Gastrocnemius medialis (tissue), 4 donors: ENCODE measurements at regions of chr1 and their contacts with region 1.

Region 1: DNA sequence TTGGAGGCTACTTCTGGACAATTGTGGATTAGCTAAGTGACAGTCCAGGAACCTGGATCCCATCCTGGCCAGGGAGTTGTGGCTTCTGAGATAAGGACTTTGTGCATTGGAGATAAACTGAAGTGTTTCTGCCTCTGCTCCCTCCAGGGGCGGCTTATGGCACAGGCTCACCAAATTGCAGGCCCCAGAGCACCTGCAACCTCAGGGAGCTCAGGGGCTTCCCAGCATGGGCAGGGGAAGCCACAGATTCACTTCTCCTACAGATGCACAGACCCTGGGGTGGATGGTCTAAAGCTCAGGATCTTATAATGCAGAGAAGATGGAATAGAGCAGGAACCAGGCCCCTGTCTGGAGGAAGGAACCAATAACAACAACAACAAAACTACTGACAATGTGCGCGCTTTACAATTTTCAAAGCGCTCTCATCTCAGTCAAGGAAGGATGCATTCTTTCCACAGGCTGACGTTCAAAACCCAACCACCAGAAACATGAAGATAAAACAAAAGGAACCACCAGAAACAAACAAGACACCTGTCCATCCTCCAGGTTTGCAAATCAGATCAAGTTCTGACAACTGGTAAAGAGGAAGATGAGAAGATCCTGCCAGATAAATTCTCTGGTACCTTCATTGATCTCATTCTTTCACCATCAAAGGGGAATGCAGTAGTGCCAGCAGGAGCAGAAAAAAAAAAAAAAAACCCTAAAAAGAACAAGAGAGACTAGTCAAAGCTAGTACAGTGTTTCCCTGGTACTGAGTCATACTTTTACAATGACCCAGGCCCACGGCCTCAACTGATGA is 121.0 kb upstream of the IRF2BP2 start:
- DNase-seq: no peak
- ATAC-seq: no peak
- H3K4me3 ChIP-seq: no peak overlapping the region
- H3K27ac ChIP-seq: no peak overlapping the region
- H3K4me1 ChIP-seq: peaks cover 27 to 37% of the 10 kb centered on the region in 2 donors
- H3K27me3 ChIP-seq: no peaks in the 10 kb centered on the region
- CTCF ChIP-seq: no peak
- POLR2A ChIP-seq: no peak

Region 2: GRCh38 chr1:234478481-234479309 is 252.3 kb before region 1 on chr1 and contains the start of gene TARBP1:
- in situ Hi-C with region 1: loop called in 1 of 4 experiments (anchors 25 kb)
- intact Hi-C with region 1: no loop called
- DNase-seq: peak; percentile 23 to 62
- ATAC-seq: peak; percentile 85 to 87
- H3K4me3 ChIP-seq: peak within 1 kb of the TSS; percentile 59 to 92 (median 76)
- H3K27ac ChIP-seq: peak within 1 kb of the TSS; percentile 79 to 92 (median 83)
- H3K4me1 ChIP-seq: peaks cover 0 to 8% of the 10 kb centered on the region in 2 donors
- H3K27me3 ChIP-seq: no peaks in the 10 kb centered on the region
- CTCF ChIP-seq: peak in 3 of 5 experiments; percentile 27 to 50 (median 29)
- POLR2A ChIP-seq: peak; percentile 54 to 57
- total RNA-seq, gene TARBP1: 5.7 to 11.9 (median 8.2) TPM

Region 3: DNA sequence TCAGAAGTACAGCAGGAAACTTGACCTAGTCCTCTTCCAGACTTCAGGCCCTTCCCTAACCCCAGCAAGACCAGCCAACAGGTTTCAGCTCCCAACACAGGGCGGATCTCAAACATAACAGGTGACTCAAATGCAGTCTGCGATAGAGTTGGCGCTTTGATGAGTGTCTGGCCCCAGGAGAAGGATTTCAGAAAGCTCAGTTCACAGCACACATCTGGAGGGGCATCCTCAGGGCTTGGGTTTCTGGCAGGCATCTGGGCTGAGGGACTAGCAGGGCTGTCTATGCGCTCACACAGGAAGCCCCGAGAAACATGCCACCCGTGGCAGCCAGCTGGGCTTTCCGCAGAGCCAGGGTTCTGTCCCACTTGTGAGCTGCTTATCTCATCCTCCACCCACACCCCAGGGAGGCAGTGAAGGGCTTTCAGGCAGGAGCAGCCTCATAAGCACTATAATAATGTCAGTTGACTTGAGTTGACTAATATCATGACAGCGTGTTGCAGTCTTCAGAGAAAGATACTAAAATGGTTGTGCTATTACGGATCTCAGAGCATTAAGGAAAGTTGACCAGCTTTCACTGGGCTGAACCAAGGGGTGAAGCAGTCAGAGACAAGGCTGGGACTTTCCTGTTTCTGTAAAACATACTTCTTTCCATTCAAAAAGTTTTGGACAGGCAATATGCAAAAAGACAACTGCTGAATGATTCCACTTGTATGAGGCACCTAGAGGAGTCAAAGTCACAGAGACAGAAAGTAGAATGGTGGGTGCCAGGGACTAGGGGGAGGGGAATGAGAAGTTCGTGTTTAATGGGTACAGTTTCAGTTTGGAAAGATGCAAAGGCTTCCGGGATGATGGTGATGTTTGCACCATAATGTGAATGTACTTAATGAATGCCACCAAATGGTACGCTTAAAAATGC is 112.0 kb after region 1 on chr1:
- in situ Hi-C with region 1: loop called in 1 of 4 experiments (anchors 25 kb)
- intact Hi-C with region 1: no loop called
- DNase-seq: no peak
- ATAC-seq: no peak
- H3K4me3 ChIP-seq: no peak overlapping the region
- H3K27ac ChIP-seq: no peak overlapping the region
- H3K4me1 ChIP-seq: peaks cover 8 to 9% of the 10 kb centered on the region in 2 donors
- H3K27me3 ChIP-seq: no peaks in the 10 kb centered on the region
- CTCF ChIP-seq: no peak
- POLR2A ChIP-seq: no peak

Region 4: DNA sequence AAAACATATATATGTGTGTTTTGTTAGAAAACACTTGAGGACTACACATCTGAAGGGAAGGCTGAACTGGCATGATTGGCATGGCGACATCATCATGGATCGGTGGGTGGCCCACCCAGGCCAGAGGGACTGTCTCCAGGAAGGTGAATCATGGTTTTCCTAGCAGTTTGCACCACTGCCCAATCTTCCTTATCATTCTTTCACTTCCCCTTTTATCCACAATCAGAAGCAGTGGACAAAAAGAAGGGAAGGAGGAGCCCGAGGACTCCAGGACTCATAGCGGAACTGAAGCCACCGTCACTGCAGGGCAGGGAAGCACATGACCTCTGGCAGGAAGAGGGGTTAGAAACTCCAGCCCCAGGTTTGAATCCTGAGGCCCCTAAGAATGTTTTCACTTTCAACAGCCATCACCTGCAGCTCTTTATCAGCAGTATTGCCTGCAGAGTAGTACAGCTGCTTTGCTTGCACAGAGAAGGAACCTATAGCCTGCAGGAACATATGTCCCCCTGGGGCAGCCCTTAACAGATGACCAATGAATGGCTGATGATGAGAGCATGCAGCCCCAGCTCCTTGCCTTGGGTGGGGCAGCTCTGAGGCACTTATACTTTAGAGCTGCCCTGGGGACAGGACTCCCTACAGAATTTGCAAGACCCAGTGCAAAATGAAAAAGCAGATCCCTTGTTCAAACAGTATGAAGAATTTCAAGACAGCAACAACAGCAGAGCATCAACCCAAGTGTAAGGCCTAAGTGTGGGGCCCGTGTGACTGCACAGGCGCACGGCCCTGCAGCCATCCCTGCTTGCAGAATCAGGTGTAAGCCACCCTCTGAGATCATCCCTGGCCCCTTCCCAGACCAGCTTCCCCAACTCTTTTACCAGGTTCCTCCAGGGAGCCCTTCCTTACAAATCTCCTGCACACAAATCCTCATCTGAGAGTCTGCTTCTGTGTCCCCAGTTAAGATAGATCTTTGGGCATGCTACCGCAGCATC is 120.8 kb after region 1 on chr1:
- in situ Hi-C with region 1: loop called in 2 of 4 experiments (anchors 25 kb)
- intact Hi-C with region 1: no loop called
- DNase-seq: no peak
- ATAC-seq: no peak
- H3K4me3 ChIP-seq: no peak overlapping the region
- H3K27ac ChIP-seq: no peak overlapping the region
- H3K4me1 ChIP-seq: no peaks in the 10 kb centered on the region
- H3K27me3 ChIP-seq: no peaks in the 10 kb centered on the region
- CTCF ChIP-seq: no peak
- POLR2A ChIP-seq: no peak

Region 5: DNA sequence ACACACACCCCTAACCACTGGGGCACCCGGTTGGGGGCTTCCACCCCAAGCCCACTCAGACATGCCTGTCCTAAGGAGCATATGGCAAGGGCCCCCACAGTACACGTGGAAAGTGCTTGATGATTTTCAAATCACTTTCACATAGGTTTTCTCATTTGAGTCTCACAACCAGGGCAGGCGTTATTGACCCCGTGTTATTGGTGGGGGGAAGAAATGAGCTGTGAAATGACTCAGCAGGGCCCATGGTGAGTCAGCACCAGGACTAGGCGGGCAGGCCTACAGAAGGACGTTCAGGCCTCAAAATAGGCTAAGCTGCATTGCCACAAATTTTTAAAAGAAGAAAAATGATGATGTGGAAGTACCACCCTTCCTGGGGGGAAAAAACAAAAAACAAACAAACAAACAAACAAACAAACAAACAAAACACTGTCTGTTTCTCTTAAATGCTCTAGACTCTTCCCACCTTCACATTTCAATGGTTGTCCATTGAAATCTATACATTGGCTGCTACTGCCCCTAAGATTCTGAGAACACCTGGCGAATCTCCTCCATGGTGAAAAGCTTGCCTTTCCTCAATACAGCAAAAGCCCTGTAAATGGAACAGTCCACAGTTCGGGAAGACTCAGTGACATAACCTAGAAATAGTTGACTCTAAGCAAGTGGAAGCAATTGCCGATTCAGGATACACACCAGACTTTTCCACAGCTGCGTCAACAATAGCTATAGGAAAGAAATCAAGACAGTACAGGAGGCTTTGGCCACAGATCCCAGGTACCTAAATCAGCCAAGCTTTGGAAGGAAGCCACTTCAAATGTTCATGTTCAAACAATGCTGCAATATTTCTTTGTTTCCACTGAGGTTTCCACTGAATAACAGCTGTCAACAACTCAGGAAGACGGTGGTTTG is 163.0 kb after region 1 on chr1:
- in situ Hi-C with region 1: loop called in 1 of 4 experiments (anchors 25 kb)
- intact Hi-C with region 1: no loop called
- DNase-seq: no peak
- ATAC-seq: no peak
- H3K4me3 ChIP-seq: no peak overlapping the region
- H3K27ac ChIP-seq: peak overlapping the region; percentile 64 to 75 (median 66)
- H3K4me1 ChIP-seq: peaks cover 37 to 39% of the 10 kb centered on the region in 2 donors
- H3K27me3 ChIP-seq: no peaks in the 10 kb centered on the region
- CTCF ChIP-seq: no peak
- POLR2A ChIP-seq: no peak

Region 6: GRCh38 chr1:235093696-235094592 is 363.0 kb after region 1 on chr1:
- in situ Hi-C with region 1: loop called in 2 of 4 experiments (anchors 25 kb)
- intact Hi-C with region 1: no loop called
- DNase-seq: peak in 1 of 2 donors; percentile 66
- ATAC-seq: peak; percentile 61 to 64
- H3K4me3 ChIP-seq: peak overlapping the region in 2 of 4 donors; percentile 15 to 37
- H3K27ac ChIP-seq: no peak overlapping the region
- H3K4me1 ChIP-seq: peaks cover 5% of the 10 kb centered on the region in 2 donors
- H3K27me3 ChIP-seq: no peaks in the 10 kb centered on the region
- CTCF ChIP-seq: peak; percentile 74 to 95 (median 82)
- POLR2A ChIP-seq: no peak